Left lung (tissue), 14 donors: ENCODE measurements at regions of chr5 and their contacts with region 1.

Region 1: DNA sequence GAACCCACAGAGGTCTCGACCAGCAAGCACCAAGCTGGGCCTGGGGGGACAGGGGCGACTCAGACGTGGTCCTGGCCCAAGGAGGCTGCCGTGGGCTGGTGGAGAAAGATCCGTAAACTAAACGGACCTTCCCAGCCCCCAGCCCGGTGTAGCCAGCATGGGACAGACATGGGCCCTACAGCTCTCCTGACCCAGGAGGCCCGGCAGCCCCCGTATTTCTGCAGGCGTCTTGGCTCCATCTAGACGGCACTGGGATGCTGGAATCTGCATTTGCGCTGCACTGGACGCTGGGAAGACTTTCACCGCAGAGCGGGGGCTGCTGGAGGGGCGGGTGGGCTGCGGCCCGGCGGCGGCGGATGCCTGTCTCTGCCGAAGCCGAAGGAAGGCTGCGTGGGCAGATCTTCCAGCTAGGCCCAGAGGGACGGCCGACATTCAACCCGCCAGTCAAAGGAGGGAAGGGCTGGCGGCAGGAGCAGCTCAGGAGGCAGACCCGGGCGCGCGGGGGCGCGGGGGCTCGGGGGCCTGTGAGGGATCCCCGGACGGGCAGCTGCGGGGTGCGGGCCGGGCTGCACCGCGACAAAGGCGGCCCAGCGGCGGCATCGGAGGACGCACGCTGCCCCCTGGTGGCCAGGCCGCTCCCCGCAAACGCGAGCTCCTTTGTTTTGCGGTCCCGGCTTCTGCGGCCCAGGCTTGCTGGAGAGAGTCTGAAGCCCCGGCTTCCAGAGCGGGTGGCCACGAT is 266.2 kb downstream of the NSG2 start:
- DNase-seq: peak in 3 of 4 donors; percentile 68 to 90 (median 75)
- ATAC-seq: peak; percentile 94
- H3K4me3 ChIP-seq: peak overlapping the region in 1 of 2 donors; percentile 15
- H3K27ac ChIP-seq: no peak overlapping the region
- H3K4me1 ChIP-seq: peaks cover 0 to 10% of the 10 kb centered on the region in 2 donors
- H3K27me3 ChIP-seq: peaks cover 10 to 60% of the 10 kb centered on the region in 2 donors
- CTCF ChIP-seq: peak; percentile 86 to 94

Region 2: DNA sequence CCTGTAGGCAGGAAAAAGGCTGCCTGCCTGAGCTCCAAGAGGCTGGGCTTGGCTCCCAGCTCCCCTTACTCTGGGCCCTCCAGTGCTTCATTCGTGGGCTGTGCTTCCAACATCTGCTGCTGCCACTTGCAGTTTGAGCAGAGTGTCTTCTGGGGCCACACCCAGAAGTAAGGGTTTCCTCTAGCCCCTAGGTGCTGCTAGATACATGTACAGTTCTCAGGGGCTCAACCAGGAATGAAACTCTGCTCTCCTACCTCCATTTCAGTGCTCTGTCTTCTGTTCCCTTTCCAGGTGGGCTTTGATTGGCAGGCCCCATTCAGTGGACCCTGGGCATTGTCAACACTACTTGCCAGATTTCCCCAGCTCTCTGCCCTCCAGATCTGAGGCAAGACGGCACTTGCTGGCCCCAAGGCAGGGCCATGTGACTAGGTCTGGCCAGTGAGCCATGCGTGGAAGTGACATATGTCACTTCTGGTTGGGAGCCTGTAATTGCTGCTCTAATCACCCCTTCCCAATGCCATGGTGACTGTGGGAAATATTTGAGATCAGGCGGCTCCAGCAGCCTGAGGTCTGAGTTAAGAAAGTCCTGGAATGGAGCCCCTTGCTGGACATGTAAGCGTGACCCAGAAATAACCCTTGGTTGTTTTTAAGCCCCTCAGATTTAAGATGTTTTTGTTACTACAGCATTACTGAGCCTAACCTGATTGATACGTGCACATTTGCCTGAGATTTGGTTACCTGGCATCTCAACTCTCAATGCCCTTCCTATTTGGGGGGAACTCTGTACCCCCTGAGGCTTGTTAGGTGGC is 685.8 kb before region 1 on chr5:
- intact Hi-C with region 1: loop called in 1 of 2 experiments (anchors 5 kb)
- DNase-seq: no peak
- ATAC-seq: peak; percentile 26
- H3K4me3 ChIP-seq: no peak overlapping the region
- H3K27ac ChIP-seq: no peak overlapping the region
- H3K4me1 ChIP-seq: no peaks in the 10 kb centered on the region
- H3K27me3 ChIP-seq: no peaks in the 10 kb centered on the region
- CTCF ChIP-seq: no peak